Natural killer cell (primary cell): ENCODE measurements at regions of chr17 and their contacts with region 1.

Region 1: DNA sequence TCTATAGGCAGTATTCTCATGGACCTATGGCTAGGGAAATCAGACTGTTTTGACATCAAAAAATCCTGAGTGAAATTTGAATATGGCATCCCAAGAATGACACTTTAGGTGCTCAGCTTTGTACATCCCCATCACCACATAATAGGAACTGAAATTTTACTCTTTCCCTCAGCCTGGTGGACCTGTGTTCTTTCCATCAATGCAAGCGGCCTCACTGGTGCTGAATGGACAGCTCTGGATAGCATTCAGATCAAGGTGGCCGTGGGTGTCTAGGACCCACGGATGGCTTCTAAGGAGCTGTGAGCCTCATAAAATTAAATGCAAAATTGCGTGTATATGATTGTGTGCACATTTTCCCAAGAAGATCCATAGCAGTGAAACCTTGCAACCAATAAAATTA is 152.6 kb downstream of the MAP2K6 start:
- DNase-seq: no peak
- ATAC-seq: no peak
- H3K4me3 ChIP-seq: no peak overlapping the region
- H3K4me3 Mint-ChIP-seq: no peak overlapping the region
- H3K27ac ChIP-seq: no peak overlapping the region
- H3K27ac Mint-ChIP-seq: no peak overlapping the region
- H3K4me1 ChIP-seq: peaks cover 5% of the 10 kb centered on the region
- H3K4me1 Mint-ChIP-seq: peaks cover 8 to 12% of the 10 kb centered on the region in 2 donors
- H3K27me3 ChIP-seq: no peaks in the 10 kb centered on the region
- H3K27me3 Mint-ChIP-seq: peaks cover 9 to 16% of the 10 kb centered on the region in 2 donors
- CTCF ChIP-seq: no peak

Region 2: GRCh38 chr17:69607162-69607834 is 40.2 kb after region 1 on chr17:
- intact Hi-C with region 1: no loop called
- DNase-seq: peak in 1 of 2 donors; percentile 22
- ATAC-seq: no peak
- H3K4me3 ChIP-seq: no peak overlapping the region
- H3K4me3 Mint-ChIP-seq: no peak overlapping the region
- H3K27ac ChIP-seq: no peak overlapping the region
- H3K27ac Mint-ChIP-seq: no peak overlapping the region
- H3K4me1 ChIP-seq: peaks cover under 1% of the 10 kb centered on the region
- H3K4me1 Mint-ChIP-seq: peaks cover 20% of the 10 kb centered on the region in 2 donors
- H3K27me3 ChIP-seq: no peaks in the 10 kb centered on the region
- H3K27me3 Mint-ChIP-seq: peaks cover 3 to 28% of the 10 kb centered on the region in 2 donors
- CTCF ChIP-seq: peak; percentile 31

Region 3: DNA sequence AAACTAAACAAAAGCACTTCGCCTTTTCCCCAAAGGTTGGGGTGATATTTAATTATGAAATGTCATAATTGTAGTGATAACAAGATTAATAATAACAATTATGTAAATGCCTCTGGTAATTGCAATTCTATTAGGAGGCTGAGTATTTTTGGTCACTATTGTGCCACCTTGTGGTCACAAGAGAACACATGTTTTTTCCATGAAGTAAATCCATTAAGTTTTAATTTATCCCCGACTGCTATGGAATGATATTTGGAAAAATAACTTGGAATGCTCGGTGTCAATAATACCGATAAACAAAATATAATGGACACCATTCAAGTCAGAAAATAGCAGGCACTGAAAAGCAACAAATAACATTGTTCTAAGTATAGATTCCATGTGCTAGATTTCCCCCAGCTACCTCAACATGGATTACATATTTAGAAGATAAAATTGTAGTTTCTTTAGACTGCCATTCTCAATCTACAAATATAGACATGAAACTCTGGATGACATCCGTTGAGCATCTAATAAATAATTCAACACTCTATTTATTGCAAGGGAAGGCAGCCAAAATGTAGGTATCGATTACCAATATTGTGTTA is 577.2 kb after region 1 on chr17:
- intact Hi-C with region 1: loop called (anchors 5 kb)
- DNase-seq: peak in 1 of 2 donors; percentile 26
- ATAC-seq: no peak
- H3K4me3 ChIP-seq: no peak overlapping the region
- H3K4me3 Mint-ChIP-seq: no peak overlapping the region
- H3K27ac ChIP-seq: no peak overlapping the region
- H3K27ac Mint-ChIP-seq: no peak overlapping the region
- H3K4me1 ChIP-seq: no peaks in the 10 kb centered on the region
- H3K4me1 Mint-ChIP-seq: no peaks in the 10 kb centered on the region
- H3K27me3 ChIP-seq: no peaks in the 10 kb centered on the region
- H3K27me3 Mint-ChIP-seq: no peaks in the 10 kb centered on the region
- CTCF ChIP-seq: peak; percentile 30

Region 4: DNA sequence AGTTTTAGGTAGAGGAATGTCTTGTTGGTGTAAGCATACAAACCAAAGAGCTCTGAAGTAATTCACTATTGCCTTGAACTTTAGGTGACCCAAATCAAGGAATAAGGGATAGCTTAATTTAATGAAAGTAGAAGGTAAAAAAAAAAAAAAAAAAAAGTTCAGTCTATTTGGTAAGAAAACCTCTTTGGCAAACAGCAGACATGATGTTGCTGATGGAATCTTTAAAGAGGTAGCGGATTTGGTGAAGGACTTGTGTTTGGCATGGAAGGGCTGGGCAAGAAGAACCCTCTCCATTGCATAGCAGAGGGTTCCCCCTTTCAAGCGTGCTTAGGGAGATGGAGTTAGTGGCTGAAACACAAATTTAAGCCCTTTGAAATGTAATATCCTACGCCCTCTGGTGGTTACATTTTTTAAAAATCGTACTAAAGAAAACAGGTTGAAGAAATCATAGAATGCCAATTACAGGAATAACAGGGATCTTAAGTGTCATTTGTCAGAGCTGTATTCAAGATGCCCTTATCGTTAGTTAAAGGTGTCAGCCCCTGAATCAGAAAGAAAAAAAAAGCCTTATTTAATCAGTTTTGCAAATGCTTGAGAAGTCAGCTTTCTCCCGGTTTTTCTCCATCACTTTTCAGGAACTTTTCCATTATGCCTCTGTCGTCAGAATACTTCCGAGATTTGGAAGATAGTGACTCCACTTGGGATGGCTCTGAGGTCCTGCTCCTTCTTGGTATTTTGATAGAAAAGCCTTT is 985.3 kb after region 1 on chr17:
- intact Hi-C with region 1: loop called (anchors 10 kb)
- DNase-seq: peak in 1 of 2 donors; percentile 25
- ATAC-seq: no peak
- H3K4me3 ChIP-seq: no peak overlapping the region
- H3K4me3 Mint-ChIP-seq: no peak overlapping the region
- H3K27ac ChIP-seq: no peak overlapping the region
- H3K27ac Mint-ChIP-seq: no peak overlapping the region
- H3K4me1 ChIP-seq: no peaks in the 10 kb centered on the region
- H3K4me1 Mint-ChIP-seq: no peaks in the 10 kb centered on the region
- H3K27me3 ChIP-seq: no peaks in the 10 kb centered on the region
- H3K27me3 Mint-ChIP-seq: no peaks in the 10 kb centered on the region
- CTCF ChIP-seq: peak; percentile 22